BJ (cell line): ENCODE measurements at regions of chr12 and their contacts with region 1.

Region 1: DNA sequence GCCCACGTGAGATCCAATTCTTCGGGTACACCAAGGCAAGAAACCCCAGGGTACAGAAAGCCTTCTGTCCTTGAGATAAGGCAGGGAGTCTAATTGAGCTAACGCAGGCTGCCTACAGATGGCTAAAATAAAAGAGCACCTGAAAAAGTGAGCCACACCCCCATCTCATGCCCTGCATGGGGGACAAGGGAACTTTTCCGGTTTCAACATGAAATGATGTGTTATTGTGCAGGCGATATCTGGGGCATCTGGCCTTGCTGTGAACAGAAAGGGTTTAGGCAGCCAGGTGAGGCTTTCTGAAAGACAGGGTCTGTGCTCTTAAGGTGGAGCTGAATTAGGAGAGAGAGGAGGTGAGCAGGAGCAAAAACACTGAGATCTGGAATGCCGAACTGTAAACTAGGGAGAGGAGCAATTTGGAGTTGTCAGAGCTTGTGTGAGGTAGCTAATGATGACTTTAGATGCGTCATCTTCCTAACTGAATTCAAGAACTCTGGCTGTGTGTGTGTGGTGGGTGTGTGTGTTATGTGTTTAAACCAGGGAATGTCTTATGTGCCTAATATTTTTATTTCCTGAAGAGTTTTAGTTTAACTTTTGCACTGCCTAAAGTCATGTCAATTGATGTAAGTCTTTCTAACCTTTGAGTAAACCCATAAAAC is 20.1 kb upstream of the LDHB start:
- DNase-seq: no peak
- H3K4me3 ChIP-seq: no peak overlapping the region
- H3K27me3 ChIP-seq: peaks cover 4% of the 10 kb centered on the region
- CTCF ChIP-seq: no peak

Region 2: GRCh38 chr12:21607701-21608100 is 70.0 kb before region 1 on chr12:
- CTCF ChIA-PET with region 1: interaction called, 11 read pairs
- POLR2A ChIA-PET with region 1: no interaction called
- DNase-seq: peak; percentile 2
- H3K4me3 ChIP-seq: no peak overlapping the region
- H3K27me3 ChIP-seq: no peaks in the 10 kb centered on the region
- CTCF ChIP-seq: peak; percentile 26

Region 3: GRCh38 chr12:21666722-21667121 is 11.0 kb before region 1 on chr12:
- CTCF ChIA-PET with region 1: interaction called, 26 read pairs
- POLR2A ChIA-PET with region 1: no interaction called
- DNase-seq: no peak
- H3K4me3 ChIP-seq: no peak overlapping the region
- H3K27me3 ChIP-seq: peaks cover 6% of the 10 kb centered on the region; the same call in 1 of the 2 replicates
- CTCF ChIP-seq: no peak

Region 4: DNA sequence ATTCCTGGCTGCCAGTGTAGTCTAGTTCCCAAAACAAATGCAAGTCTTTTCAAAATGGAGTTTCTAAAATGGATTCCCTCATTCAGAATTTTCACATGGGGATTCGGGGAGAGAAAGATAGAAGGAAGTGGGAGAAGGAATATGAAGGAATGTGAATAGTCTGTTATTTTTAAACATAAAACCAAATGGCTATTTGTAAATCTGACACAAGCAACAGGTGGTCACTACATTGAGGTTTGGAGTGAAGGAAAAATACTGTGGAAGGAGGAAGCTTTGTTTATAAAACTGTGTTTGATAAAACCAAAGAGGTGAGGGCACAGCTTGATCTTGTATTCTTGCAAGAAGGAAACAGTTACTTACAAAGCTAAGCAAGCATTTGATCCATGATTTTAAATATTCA is 162.0 kb after region 1 on chr12:
- CTCF ChIA-PET with region 1: no interaction called
- POLR2A ChIA-PET with region 1: no interaction called
- DNase-seq: no peak
- H3K4me3 ChIP-seq: no peak overlapping the region
- H3K27me3 ChIP-seq: no peaks in the 10 kb centered on the region
- CTCF ChIP-seq: no peak